ENCODE measurements at regions of chr16 and their contacts with region 1.

Region 1: GRCh38 chr16:82728901-82729300 is 102.1 kb downstream of the CDH13 start:
- DNase-seq: no peak
- ATAC-seq: no peak
- H3K4me3 Mint-ChIP-seq: no peak overlapping the region
- H3K27ac Mint-ChIP-seq: no peak overlapping the region
- H3K4me1 Mint-ChIP-seq: peaks cover 11% of the 10 kb centered on the region
- H3K27me3 Mint-ChIP-seq: no peaks in the 10 kb centered on the region
- CTCF ChIP-seq: no peak

Region 2: GRCh38 chr16:82653550-82654511 is 75.1 kb before region 1 on chr16:
- CTCF ChIA-PET with region 1: no interaction called
- POLR2A ChIA-PET with region 1: no interaction called
- intact Hi-C with region 1: loop called (anchors 5 kb)
- DNase-seq: no peak
- ATAC-seq: peak; percentile 89
- H3K4me3 Mint-ChIP-seq: no peak overlapping the region
- H3K27ac Mint-ChIP-seq: no peak overlapping the region
- H3K4me1 Mint-ChIP-seq: peaks cover 23% of the 10 kb centered on the region
- H3K27me3 Mint-ChIP-seq: no peaks in the 10 kb centered on the region
- CTCF ChIP-seq: no peak

Region 3: DNA sequence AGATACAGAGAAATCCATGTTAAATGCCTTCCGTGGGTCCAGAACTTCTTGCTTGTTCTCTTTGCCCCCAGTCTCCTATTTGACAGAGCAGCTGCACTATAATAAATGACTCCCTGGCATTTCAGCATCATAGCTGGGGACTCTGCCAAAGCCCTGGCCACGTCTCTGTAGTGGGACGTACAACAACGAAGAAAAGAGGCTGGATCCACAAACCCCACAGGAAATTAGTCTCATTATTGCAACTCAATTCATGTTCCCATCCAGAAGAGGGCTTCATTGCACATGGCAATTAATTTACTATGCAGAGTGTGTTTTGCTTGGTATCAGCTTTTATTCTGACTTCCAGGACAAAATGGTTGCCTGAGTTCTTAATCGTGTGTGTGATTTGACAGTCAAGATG is 19.1 kb after region 1 on chr16:
- CTCF ChIA-PET with region 1: no interaction called
- POLR2A ChIA-PET with region 1: no interaction called
- intact Hi-C with region 1: no loop called
- DNase-seq: no peak
- ATAC-seq: no peak
- H3K4me3 Mint-ChIP-seq: no peak overlapping the region
- H3K27ac Mint-ChIP-seq: no peak overlapping the region
- H3K4me1 Mint-ChIP-seq: peaks cover 12% of the 10 kb centered on the region
- H3K27me3 Mint-ChIP-seq: peaks cover 5% of the 10 kb centered on the region
- CTCF ChIP-seq: no peak

Region 4: GRCh38 chr16:82782715-82783251 is 53.9 kb after region 1 on chr16:
- CTCF ChIA-PET with region 1: no interaction called
- POLR2A ChIA-PET with region 1: no interaction called
- intact Hi-C with region 1: loop called (anchors 5 kb)
- DNase-seq: no peak
- ATAC-seq: no peak
- H3K4me3 Mint-ChIP-seq: no peak overlapping the region
- H3K27ac Mint-ChIP-seq: no peak overlapping the region
- H3K4me1 Mint-ChIP-seq: peaks cover 24% of the 10 kb centered on the region
- H3K27me3 Mint-ChIP-seq: no peaks in the 10 kb centered on the region
- CTCF ChIP-seq: no peak

Measured in activated B cell treated with CpG ODN at 0.5 μM for 24 hours (primary cell).